ENCODE measurements at regions of chr22 and their contacts with region 1.

Region 1: GRCh38 chr22:29225422-29226131 is 19.9 kb downstream of the EMID1 start:
- DNase-seq: no peak
- H3K4me3 Mint-ChIP-seq: no peak overlapping the region
- H3K27ac Mint-ChIP-seq: no peak overlapping the region
- H3K4me1 Mint-ChIP-seq: no peaks in the 10 kb centered on the region
- H3K27me3 Mint-ChIP-seq: no peaks in the 10 kb centered on the region

Region 2: GRCh38 chr22:28772633-28773460 is 452.7 kb before region 1 on chr22 and contains the start of gene CCDC117:
- CTCF ChIA-PET with region 1: no interaction called
- POLR2A ChIA-PET with region 1: interaction called, 10 read pairs
- DNase-seq: peak; percentile 95
- H3K4me3 Mint-ChIP-seq: peak within 1 kb of the TSS; percentile 94
- H3K27ac Mint-ChIP-seq: peak within 1 kb of the TSS; percentile 94
- H3K4me1 Mint-ChIP-seq: peaks cover 25% of the 10 kb centered on the region
- H3K27me3 Mint-ChIP-seq: no peaks in the 10 kb centered on the region
- total RNA-seq, gene CCDC117: 30.2 to 31.9 TPM

Region 3: GRCh38 chr22:29275819-29276565 is 50.4 kb after region 1 on chr22:
- CTCF ChIA-PET with region 1: no interaction called
- POLR2A ChIA-PET with region 1: no interaction called
- DNase-seq: no peak
- H3K4me3 Mint-ChIP-seq: no peak overlapping the region
- H3K27ac Mint-ChIP-seq: peak overlapping the region; percentile 69
- H3K4me1 Mint-ChIP-seq: peaks cover 57% of the 10 kb centered on the region
- H3K27me3 Mint-ChIP-seq: no peaks in the 10 kb centered on the region

Region 4: GRCh38 chr22:29330753-29331152 is 105.2 kb after region 1 on chr22:
- CTCF ChIA-PET with region 1: no interaction called
- POLR2A ChIA-PET with region 1: no interaction called
- DNase-seq: no peak
- H3K4me3 Mint-ChIP-seq: no peak overlapping the region
- H3K27ac Mint-ChIP-seq: no peak overlapping the region
- H3K4me1 Mint-ChIP-seq: no peaks in the 10 kb centered on the region
- H3K27me3 Mint-ChIP-seq: no peaks in the 10 kb centered on the region

Region 5: GRCh38 chr22:29503811-29504372 is 278.3 kb after region 1 on chr22:
- CTCF ChIA-PET with region 1: no interaction called
- POLR2A ChIA-PET with region 1: no interaction called
- DNase-seq: no peak
- H3K4me3 Mint-ChIP-seq: no peak overlapping the region
- H3K27ac Mint-ChIP-seq: no peak overlapping the region
- H3K4me1 Mint-ChIP-seq: no peaks in the 10 kb centered on the region
- H3K27me3 Mint-ChIP-seq: no peaks in the 10 kb centered on the region